Activated T-helper 1 cell treated with anti-CD3 and anti-CD28 coated beads, Interleukin-12 subunit alpha, Interleukin-12 subunit beta, Interleukin-2, Interleukin-4 antibody, amounts not matched to agents 30 ng/mL and 10 ng/mL and 1 ng/mL, durations not matched to agents 14 hours and 24 hours and 36 hours (primary cell): ENCODE measurements at regions of chrX and their contacts with region 1.

Region 1: DNA sequence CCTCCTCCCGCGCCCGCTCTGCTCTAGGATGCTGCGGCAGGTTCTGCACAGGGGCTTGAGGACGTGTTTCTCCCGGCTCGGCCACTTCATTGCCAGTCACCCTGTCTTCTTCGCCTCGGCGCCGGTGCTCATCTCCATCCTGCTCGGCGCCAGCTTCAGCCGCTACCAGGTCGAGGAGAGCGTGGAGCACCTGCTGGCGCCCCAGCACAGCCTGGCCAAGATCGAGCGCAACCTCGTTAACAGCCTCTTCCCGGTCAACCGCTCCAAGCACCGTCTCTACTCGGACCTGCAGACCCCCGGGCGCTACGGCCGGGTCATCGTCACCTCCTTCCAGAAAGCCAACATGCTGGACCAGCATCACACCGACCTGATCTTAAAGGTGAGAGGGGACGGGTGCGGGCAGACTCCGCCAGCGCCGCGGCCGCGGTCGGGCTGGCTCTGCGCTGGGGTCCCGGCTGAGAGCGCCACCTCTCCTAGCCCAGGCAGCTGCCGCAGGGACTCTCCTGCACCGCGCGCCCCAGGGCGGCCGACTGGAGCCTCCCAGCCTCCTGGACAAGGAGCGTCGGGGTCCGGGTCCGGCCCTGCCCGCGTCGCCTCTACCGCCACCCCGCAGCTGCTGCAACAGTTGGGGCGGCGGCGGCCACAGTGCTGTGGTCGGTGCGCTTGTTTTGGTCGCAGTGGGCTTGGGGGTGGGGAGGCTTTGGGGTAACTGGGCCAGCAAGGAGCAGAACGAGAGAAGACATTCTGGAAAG is at the start of gene PTCHD1:
- DNase-seq: no peak
- H3K4me3 Mint-ChIP-seq: peak within 1 kb of the TSS; percentile 33
- H3K27ac Mint-ChIP-seq: peak within 1 kb of the TSS; percentile 45
- H3K4me1 Mint-ChIP-seq: no peaks in the 10 kb centered on the region
- H3K27me3 Mint-ChIP-seq: peaks cover 39% of the 10 kb centered on the region
- total RNA-seq, gene PTCHD1: not detected in 2 replicates

Region 2: DNA sequence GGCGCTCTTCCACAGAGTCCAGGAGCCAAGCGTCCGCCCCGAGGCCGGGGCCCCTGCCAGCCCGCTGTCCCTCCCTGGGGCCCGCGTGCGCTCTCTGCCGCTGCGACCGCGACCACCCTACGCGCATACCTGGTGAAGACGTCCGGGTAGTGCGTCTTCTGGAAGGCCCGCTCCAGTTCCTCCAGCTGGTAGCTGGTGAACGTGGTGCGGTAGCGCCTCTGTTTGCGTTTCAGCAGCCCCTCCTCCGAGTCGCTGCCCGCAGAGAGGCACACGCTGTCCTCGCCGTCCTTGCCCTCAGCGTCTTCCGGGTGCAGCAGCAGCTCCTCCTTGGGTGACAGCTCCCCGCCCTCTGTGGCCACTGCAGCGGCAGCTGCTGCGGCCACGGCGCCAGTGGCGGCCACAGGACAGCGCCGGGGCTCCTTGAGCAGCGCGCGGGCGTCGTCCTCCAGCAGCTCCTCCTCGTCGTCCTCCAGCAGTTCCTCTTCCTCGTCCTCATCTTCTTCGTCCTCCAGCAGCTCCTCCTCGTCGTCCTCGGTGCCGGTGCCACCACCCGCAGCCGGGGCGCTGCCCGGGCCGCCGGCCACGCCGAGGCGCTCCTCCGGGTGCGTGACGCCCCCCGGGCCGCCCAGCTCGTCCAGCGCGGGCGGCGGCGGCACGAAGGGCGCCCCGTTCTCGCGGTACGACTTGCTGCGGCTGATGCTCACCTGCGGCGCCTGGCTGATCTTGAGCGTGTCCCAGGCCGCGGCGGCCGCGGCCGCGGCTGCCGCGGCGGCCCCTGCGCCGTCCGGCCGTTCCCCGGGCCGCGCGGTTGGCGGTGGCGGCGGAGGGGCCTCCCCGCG is 1678.0 kb after region 1 on chrX:
- intact Hi-C with region 1: loop called (anchors 5 kb)
- DNase-seq: no peak
- H3K4me3 Mint-ChIP-seq: peak overlapping the region; percentile 78
- H3K27ac Mint-ChIP-seq: no peak overlapping the region
- H3K4me1 Mint-ChIP-seq: peaks cover 7% of the 10 kb centered on the region
- H3K27me3 Mint-ChIP-seq: peaks cover 62% of the 10 kb centered on the region